Activated CD4-positive, alpha-beta T cell treated with anti-CD3 and anti-CD28 coated beads for 36 hours (primary cell): ENCODE measurements at regions of chr5 and their contacts with region 1.

Region 1: GRCh38 chr5:80093796-80094195 is 58.6 kb downstream of the THBS4 start:
- DNase-seq: no peak
- ATAC-seq: no peak
- H3K4me3 Mint-ChIP-seq: no peak overlapping the region
- H3K27ac Mint-ChIP-seq: peak overlapping the region; percentile 39
- H3K4me1 Mint-ChIP-seq: peaks cover 23% of the 10 kb centered on the region
- H3K27me3 Mint-ChIP-seq: no peaks in the 10 kb centered on the region

Region 2: GRCh38 chr5:80275347-80275746 is 181.6 kb after region 1 on chr5:
- CTCF ChIA-PET with region 1: interaction called, 17 read pairs
- POLR2A ChIA-PET with region 1: no interaction called
- intact Hi-C with region 1: loop called (anchors 1 kb)
- DNase-seq: peak; percentile 33
- ATAC-seq: peak; percentile 70
- H3K4me3 Mint-ChIP-seq: no peak overlapping the region
- H3K27ac Mint-ChIP-seq: no peak overlapping the region
- H3K4me1 Mint-ChIP-seq: peaks cover 27% of the 10 kb centered on the region
- H3K27me3 Mint-ChIP-seq: no peaks in the 10 kb centered on the region

Region 3: GRCh38 chr5:80308526-80308925 is 214.7 kb after region 1 on chr5:
- CTCF ChIA-PET with region 1: interaction called, 198 read pairs
- POLR2A ChIA-PET with region 1: interaction called, 3 read pairs
- intact Hi-C with region 1: loop called (anchors 1 kb)
- DNase-seq: no peak
- ATAC-seq: no peak
- H3K4me3 Mint-ChIP-seq: no peak overlapping the region
- H3K27ac Mint-ChIP-seq: no peak overlapping the region
- H3K4me1 Mint-ChIP-seq: no peaks in the 10 kb centered on the region
- H3K27me3 Mint-ChIP-seq: no peaks in the 10 kb centered on the region